CD8-positive, alpha-beta T cell (primary cell): ENCODE measurements at regions of chr6 and their contacts with region 1.

Region 1: GRCh38 chr6:6193221-6193745 is 127.2 kb downstream of the F13A1 start:
- DNase-seq: no peak
- ATAC-seq: no peak
- H3K4me3 ChIP-seq: no peak overlapping the region
- H3K4me3 Mint-ChIP-seq: no peak overlapping the region
- H3K27ac ChIP-seq: no peak overlapping the region
- H3K27ac Mint-ChIP-seq: no peak overlapping the region
- H3K4me1 ChIP-seq: no peaks in the 10 kb centered on the region
- H3K4me1 Mint-ChIP-seq: no peaks in the 10 kb centered on the region
- H3K27me3 ChIP-seq: peaks cover 0 to 5% of the 10 kb centered on the region in 2 experiments
- H3K27me3 Mint-ChIP-seq: peaks cover 32% of the 10 kb centered on the region
- CTCF ChIP-seq: no peak

Region 2: DNA sequence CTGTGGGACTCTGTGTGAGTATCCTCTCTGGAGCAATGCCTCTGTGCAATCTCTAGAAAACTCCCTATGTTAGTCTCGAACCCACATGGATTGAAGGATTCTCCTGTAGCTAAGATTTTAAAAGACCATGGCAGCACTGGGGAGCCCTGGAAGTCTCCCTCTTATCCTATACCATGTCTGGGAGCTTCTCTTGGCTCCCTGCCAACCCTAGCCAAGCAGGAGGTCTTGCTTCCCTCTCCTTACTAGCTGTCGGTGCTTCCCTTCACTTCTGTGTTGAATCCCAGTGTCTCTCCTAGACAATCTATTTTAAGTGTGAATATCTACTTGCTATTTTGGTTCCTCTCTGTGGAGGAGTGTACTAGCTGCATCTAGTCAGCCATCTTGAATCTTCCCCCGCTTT is 67.8 kb before region 1 on chr6:
- CTCF ChIA-PET with region 1: no interaction called
- POLR2A ChIA-PET with region 1: no interaction called
- intact Hi-C with region 1: no loop called
- DNase-seq: no peak
- ATAC-seq: no peak
- H3K4me3 ChIP-seq: no peak overlapping the region
- H3K4me3 Mint-ChIP-seq: no peak overlapping the region
- H3K27ac ChIP-seq: no peak overlapping the region
- H3K27ac Mint-ChIP-seq: no peak overlapping the region
- H3K4me1 ChIP-seq: no peaks in the 10 kb centered on the region
- H3K4me1 Mint-ChIP-seq: no peaks in the 10 kb centered on the region
- H3K27me3 ChIP-seq: no peaks in the 10 kb centered on the region
- H3K27me3 Mint-ChIP-seq: peaks cover 12% of the 10 kb centered on the region
- CTCF ChIP-seq: no peak

Region 3: DNA sequence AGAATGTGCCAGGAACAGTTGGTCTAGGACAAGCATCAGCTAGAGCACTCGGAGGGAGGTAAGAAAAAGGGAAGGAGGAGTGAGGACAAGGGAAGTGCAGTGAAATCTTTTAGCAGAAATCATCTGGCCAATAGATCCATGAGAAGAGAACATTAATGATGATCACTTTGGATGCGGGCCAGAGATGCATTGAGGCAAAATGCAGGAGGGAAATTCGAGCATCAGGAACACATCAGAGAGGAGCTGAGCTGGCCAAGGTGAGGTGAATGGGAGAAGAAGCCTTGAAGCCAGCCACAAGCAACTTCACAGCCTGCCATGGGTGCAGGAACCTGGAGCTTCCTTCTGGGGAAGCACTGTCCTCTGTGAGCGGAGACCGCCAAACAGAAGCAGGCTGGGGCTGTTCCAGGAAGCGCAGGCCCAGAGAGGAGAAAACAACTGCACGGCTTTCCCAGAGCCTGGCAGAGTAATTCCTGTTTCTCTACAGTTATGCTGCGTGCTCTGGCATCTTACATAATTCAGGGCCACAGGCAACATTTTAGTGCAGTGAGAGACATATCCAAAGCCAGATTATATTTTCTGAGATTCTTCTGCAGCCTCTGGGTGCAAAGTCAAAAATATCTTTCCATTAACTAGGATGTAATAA is 16.6 kb before region 1 on chr6:
- CTCF ChIA-PET with region 1: no interaction called
- POLR2A ChIA-PET with region 1: no interaction called
- intact Hi-C with region 1: loop called in 1 of 2 experiments (anchors 1 kb)
- DNase-seq: no peak
- ATAC-seq: no peak
- H3K4me3 ChIP-seq: no peak overlapping the region
- H3K4me3 Mint-ChIP-seq: no peak overlapping the region
- H3K27ac ChIP-seq: no peak overlapping the region
- H3K27ac Mint-ChIP-seq: no peak overlapping the region
- H3K4me1 ChIP-seq: no peaks in the 10 kb centered on the region
- H3K4me1 Mint-ChIP-seq: no peaks in the 10 kb centered on the region
- H3K27me3 ChIP-seq: no peaks in the 10 kb centered on the region
- H3K27me3 Mint-ChIP-seq: peaks cover 9% of the 10 kb centered on the region
- CTCF ChIP-seq: no peak